IMR-90 (cell line): ENCODE measurements at regions of chr18 and their contacts with region 1.

Region 1: GRCh38 chr18:62790871-62791772 is 75.8 kb downstream of the PHLPP1 start:
- DNase-seq: peak; percentile 75
- ATAC-seq: peak; percentile 69
- H3K4me3 ChIP-seq: no peak overlapping the region
- H3K27ac ChIP-seq: no peak overlapping the region
- H3K4me1 ChIP-seq: peaks cover 2% of the 10 kb centered on the region; the same call in 1 of the 2 replicates
- H3K27me3 ChIP-seq: no peaks in the 10 kb centered on the region
- CTCF ChIP-seq: no peak
- POLR2A ChIP-seq: no peak
- RAD21 ChIP-seq: no peak

Region 2: GRCh38 chr18:62850619-62851309 is 59.6 kb after region 1 on chr18:
- CTCF ChIA-PET with region 1: no interaction called
- POLR2A ChIA-PET with region 1: no interaction called
- dilution Hi-C with region 1: no loop called
- in situ Hi-C with region 1: loop called (anchors 10 kb)
- intact Hi-C with region 1: no loop called
- DNase-seq: no peak
- ATAC-seq: no peak
- H3K4me3 ChIP-seq: no peak overlapping the region
- H3K27ac ChIP-seq: no peak overlapping the region
- H3K4me1 ChIP-seq: peaks cover 4% of the 10 kb centered on the region; the same call in 1 of the 2 replicates
- H3K27me3 ChIP-seq: no peaks in the 10 kb centered on the region
- CTCF ChIP-seq: no peak
- POLR2A ChIP-seq: no peak
- RAD21 ChIP-seq: no peak